ENCODE measurements at regions of chr5 and their contacts with region 1.

Region 1: GRCh38 chr5:134648425-134649162 is at the start of gene SEC24A:
- DNase-seq: peak; percentile 95
- ATAC-seq: peak; percentile 95
- total RNA-seq, gene SEC24A: 6.9 TPM

Region 2: GRCh38 chr5:134206627-134207160 is 441.9 kb before region 1 on chr5:
- intact Hi-C with region 1: no loop called
- DNase-seq: no peak
- ATAC-seq: no peak

Region 3: GRCh38 chr5:134289509-134290113 is 359.0 kb before region 1 on chr5:
- intact Hi-C with region 1: no loop called
- DNase-seq: no peak
- ATAC-seq: peak; percentile 92

Region 4: DNA sequence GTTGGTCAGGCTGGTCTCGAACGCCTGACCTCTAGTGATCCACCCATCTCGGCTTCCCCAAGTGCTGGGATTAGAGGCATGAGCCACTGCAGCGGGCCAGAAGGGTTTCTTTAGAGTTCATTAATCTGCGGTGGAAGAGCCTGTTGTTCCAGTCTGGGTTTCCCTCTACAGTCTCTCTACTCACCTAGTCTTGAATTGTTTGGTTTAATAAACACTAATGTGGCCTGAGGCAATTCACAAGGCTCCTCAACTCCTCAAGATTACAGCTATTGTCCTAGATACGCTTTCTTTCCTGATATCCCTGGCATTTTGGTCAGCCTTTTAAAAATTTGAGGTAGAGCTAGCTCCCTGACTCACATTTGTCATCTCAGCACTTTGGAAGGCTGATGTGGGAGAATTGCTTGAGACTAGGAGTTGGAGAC is 11.4 kb before region 1 on chr5:
- intact Hi-C with region 1: loop called (anchors 1 kb)
- DNase-seq: no peak
- ATAC-seq: no peak